Tibial artery (tissue), 4 donors: ENCODE measurements at regions of chr7 and their contacts with region 1.

Region 1: GRCh38 chr7:107725151-107725740 is 18.7 kb upstream of the CBLL1 start:
- DNase-seq: peak in 1 of 2 donors; percentile 27
- H3K4me3 ChIP-seq: no peak overlapping the region
- H3K27ac ChIP-seq: no peak overlapping the region
- H3K4me1 ChIP-seq: no peaks in the 10 kb centered on the region
- H3K27me3 ChIP-seq: peaks cover 0 to 12% of the 10 kb centered on the region in 2 donors
- CTCF ChIP-seq: peak; percentile 65 to 71

Region 2: GRCh38 chr7:107462740-107463444 is 262.4 kb before region 1 on chr7:
- intact Hi-C with region 1: loop called (anchors 5 kb)
- DNase-seq: peak; percentile 61 to 62
- H3K4me3 ChIP-seq: no peak overlapping the region
- H3K27ac ChIP-seq: no peak overlapping the region
- H3K4me1 ChIP-seq: no peaks in the 10 kb centered on the region
- H3K27me3 ChIP-seq: no peaks in the 10 kb centered on the region
- CTCF ChIP-seq: peak; percentile 66 to 81